ENCODE measurements at regions of chr6 and their contacts with region 1.

Region 1: DNA sequence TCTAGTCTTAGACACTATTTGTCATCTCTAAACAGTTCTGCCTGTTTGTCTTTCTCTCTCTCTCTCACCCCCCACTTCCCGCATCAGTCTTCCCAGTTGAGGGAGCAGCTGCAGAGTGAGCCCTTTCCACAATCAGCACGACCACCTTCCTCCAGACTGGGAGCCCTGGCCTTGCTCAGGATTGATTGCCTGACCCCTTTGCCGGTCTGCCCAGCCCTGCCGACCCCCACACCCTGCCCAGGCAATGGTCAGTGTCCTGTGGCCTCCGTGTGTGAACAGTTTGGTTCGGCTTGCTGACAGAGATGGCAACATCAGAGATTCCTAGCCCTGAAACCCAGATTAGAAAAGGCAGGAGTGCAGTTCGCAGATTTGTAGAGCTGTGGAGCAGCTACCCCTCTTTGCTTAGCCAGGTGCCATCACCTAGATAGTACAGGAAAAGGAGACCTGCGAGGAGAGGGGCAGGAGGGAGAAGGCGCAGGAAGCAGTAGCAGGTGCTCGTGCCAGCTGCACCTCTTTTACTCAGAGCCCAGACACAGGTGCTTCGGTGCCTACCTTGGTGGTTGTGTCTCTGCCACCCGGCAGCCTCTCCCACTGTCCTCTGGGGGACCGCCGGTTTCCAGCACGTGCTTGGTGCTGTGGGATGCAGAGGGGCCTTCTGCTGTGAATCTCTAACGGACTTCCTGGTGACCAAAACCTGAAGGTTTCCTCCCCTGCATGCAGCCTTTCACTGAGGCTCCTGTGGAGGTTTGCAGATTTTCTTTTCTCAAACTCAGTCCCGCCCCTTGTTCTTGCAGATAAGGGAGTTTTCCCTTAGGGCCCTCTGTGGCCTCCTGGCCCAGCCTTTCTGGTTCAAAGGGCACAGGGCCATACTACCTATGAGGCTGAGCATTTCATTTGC is 92.4 kb downstream of the SCML4 start:
- DNase-seq: peak in 5 of 10 donors; percentile 23 to 58 (median 33)
- ATAC-seq: peak; percentile 43 to 50
- H3K4me3 Mint-ChIP-seq: peak overlapping the region; percentile 87 to 99 (median 94)
- H3K27ac Mint-ChIP-seq: peak overlapping the region; percentile 91 to 97 (median 96)
- H3K4me1 Mint-ChIP-seq: peaks cover 45 to 96% (median 87%) of the 10 kb centered on the region in 4 donors
- H3K27me3 Mint-ChIP-seq: no peaks in the 10 kb centered on the region

Region 2: DNA sequence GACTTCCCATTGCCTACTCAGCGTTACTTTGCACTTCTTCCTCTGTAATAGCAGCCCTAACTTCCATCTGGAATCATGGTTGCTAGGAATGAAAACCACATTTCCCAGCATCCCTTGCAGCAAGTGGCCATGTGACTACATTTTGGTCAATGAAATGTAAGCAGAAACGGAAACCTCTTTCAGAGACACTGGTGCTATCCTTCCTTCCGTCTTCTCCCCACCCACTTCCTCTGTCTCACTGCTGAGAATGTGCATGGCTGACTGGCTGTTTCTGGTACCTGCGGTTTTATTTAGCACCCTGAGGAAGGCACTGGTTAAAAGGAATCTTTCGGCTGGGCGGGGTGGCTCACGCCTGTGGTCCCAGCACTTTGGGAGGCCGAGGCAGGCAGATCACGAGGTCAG is 15.0 kb before region 1 on chr6:
- POLR2A ChIA-PET with region 1: interaction called, 34 read pairs
- DNase-seq: peak; percentile 25 to 87 (median 76)
- ATAC-seq: peak; percentile 90 to 94
- H3K4me3 Mint-ChIP-seq: peak overlapping the region in 9 of 10 donors; percentile 34 to 76 (median 60)
- H3K27ac Mint-ChIP-seq: peak overlapping the region in 9 of 10 donors; percentile 87 to 96 (median 94)
- H3K4me1 Mint-ChIP-seq: peaks cover 42 to 86% (median 77%) of the 10 kb centered on the region in 4 donors
- H3K27me3 Mint-ChIP-seq: no peaks in the 10 kb centered on the region

Region 3: DNA sequence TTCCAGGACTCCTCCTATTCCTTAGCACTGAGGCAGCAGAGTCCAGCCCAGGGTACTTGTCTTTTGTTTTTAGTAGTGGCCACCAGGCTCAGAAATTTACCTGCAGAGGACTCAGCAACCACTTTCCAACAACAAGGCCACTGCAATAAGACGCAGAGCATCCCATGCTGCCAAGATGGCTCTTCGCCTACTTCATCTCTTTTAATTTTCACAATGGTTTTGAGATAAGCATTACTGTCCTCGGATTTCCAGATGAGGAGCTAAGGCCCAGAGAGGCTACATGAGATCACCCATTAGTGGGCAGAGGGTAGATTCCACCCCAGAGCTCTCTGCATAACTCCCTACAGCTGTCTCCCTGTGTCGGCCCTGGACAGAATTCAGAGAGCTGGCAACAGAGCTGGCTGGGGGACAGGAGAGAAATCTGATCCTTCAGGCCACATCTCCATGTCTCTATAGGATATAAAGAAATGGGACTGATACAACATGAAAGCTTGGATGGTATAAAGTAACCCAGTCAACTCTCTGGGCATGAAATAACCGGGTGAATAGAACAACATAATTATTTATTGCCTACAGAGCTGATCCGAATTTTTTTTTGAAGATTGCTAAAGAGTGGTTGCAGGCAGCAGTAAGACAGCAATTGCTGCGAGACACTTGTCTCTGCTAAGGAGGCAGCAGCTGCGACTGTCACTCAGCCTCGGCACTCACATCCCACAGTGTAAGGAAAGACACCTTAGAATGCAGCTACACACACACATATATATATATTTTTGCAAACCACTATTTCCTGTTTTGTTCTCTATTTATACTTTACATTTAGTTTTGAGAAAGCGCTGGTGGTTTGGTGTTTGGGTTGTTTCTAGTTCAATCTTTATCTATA is 55.3 kb after region 1 on chr6:
- POLR2A ChIA-PET with region 1: interaction called, 35 read pairs
- DNase-seq: peak in 8 of 10 donors; percentile 20 to 71 (median 48)
- ATAC-seq: peak; percentile 71 to 82
- H3K4me3 Mint-ChIP-seq: peak overlapping the region; percentile 68 to 87 (median 82)
- H3K27ac Mint-ChIP-seq: peak overlapping the region; percentile 68 to 98 (median 95)
- H3K4me1 Mint-ChIP-seq: peaks cover 57 to 91% (median 87%) of the 10 kb centered on the region in 4 donors
- H3K27me3 Mint-ChIP-seq: no peaks in the 10 kb centered on the region

Region 4: DNA sequence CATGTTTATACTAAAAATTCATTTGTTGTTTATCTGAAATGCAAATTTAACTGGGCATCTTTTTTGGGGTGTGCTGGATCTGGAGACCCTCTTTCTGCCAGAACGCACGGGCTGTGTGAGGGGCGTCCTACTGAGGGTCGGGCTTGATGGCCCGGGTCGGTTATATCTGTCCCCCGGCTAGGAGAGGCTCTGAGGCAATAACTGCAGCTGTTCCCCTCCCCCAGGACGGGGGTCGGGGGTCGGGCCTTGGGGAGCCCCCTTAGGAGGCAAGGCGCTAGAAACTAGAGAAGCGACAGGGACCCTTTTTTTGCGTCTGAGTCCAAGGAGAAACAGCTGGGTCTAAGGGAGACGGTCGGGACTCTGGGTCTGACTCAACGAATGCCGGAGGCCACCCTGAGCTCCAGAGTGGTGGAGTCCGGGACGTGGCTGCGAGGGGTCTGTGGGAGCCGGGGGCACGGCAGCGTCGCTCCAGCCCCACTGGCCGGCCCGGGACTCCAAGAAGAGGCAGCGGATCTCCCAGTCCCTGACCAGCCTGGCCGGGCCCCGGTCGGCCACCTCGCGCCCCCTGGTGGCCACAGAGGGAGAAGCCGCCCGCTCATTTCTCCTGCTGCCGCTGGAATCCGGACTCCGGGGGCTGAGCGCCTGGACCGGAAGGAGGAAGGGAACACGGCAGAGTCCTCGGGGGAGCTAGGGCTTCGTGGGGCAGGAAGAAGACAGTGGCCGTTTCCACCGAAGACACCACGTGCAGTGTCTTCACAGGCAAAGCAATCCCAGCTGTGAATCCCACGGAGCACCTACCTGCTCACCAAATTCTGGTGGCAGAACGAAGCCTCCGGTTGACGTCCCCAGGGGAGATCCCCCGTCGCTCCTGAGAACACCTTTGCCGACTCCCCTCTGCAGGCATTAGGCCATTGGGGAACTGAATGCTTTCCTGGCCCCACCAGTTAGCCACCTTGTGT is 116.5 kb after region 1 on chr6:
- POLR2A ChIA-PET with region 1: interaction called, 59 read pairs
- DNase-seq: peak; percentile 59 to 91 (median 79)
- ATAC-seq: peak; percentile 85 to 86
- H3K4me3 Mint-ChIP-seq: peak overlapping the region; percentile 77 to 93 (median 86)
- H3K27ac Mint-ChIP-seq: peak overlapping the region; percentile 81 to 95 (median 92)
- H3K4me1 Mint-ChIP-seq: peaks cover 11 to 32% (median 22%) of the 10 kb centered on the region in 4 donors
- H3K27me3 Mint-ChIP-seq: no peaks in the 10 kb centered on the region